ENCODE measurements at regions of chr10 and their contacts with region 1.

Region 1: GRCh38 chr10:103712570-103713498 is 142.5 kb downstream of the SH3PXD2A start:
- DNase-seq: peak; percentile 79 to 88
- H3K4me3 ChIP-seq: no peak overlapping the region
- H3K4me3 Mint-ChIP-seq: no peak overlapping the region
- H3K27ac Mint-ChIP-seq: no peak overlapping the region
- H3K4me1 ChIP-seq: peaks cover 21% of the 10 kb centered on the region
- H3K4me1 Mint-ChIP-seq: peaks cover 22% of the 10 kb centered on the region
- H3K27me3 ChIP-seq: no peaks in the 10 kb centered on the region
- H3K27me3 Mint-ChIP-seq: no peaks in the 10 kb centered on the region
- CTCF ChIP-seq: peak; percentile 82 to 93

Region 2: GRCh38 chr10:103451831-103452505 is 260.9 kb before region 1 on chr10 and contains the start of gene CALHM2:
- CTCF ChIA-PET with region 1: no interaction called
- POLR2A ChIA-PET with region 1: no interaction called
- intact Hi-C with region 1: no loop called
- DNase-seq: peak; percentile 56 to 58
- H3K4me3 ChIP-seq: peak within 1 kb of the TSS; percentile 30
- H3K4me3 Mint-ChIP-seq: peak within 1 kb of the TSS; percentile 70
- H3K27ac Mint-ChIP-seq: no peak within 1 kb of the TSS
- H3K4me1 ChIP-seq: peaks cover 5% of the 10 kb centered on the region; the same call in 1 of the 2 replicates
- H3K4me1 Mint-ChIP-seq: no peaks in the 10 kb centered on the region
- H3K27me3 ChIP-seq: no peaks in the 10 kb centered on the region
- H3K27me3 Mint-ChIP-seq: no peaks in the 10 kb centered on the region
- CTCF ChIP-seq: no peak
- total RNA-seq, gene CALHM2: 0.52 and 0.58 TPM in 2 replicates

Region 3: GRCh38 chr10:103733045-103733419 is 20.2 kb after region 1 on chr10:
- CTCF ChIA-PET with region 1: interaction called, 3 read pairs
- POLR2A ChIA-PET with region 1: no interaction called
- intact Hi-C with region 1: loop called (anchors 2 kb)
- DNase-seq: no peak
- H3K4me3 ChIP-seq: no peak overlapping the region
- H3K4me3 Mint-ChIP-seq: no peak overlapping the region
- H3K27ac Mint-ChIP-seq: no peak overlapping the region
- H3K4me1 ChIP-seq: peaks cover 9% of the 10 kb centered on the region
- H3K4me1 Mint-ChIP-seq: peaks cover 7% of the 10 kb centered on the region
- H3K27me3 ChIP-seq: no peaks in the 10 kb centered on the region
- H3K27me3 Mint-ChIP-seq: no peaks in the 10 kb centered on the region
- CTCF ChIP-seq: no peak

Region 4: GRCh38 chr10:103793920-103794883 is 81.4 kb after region 1 on chr10:
- CTCF ChIA-PET with region 1: interaction called, 5 read pairs
- POLR2A ChIA-PET with region 1: interaction called, 3 read pairs
- intact Hi-C with region 1: loop called (anchors 2 kb)
- DNase-seq: peak; percentile 94 to 97
- H3K4me3 ChIP-seq: 0 out of 2 replicates have a peak overlapping the region, but pooled peaks have one; percentile 1
- H3K4me3 Mint-ChIP-seq: peak overlapping the region; percentile 62
- H3K27ac Mint-ChIP-seq: peak overlapping the region; percentile 90
- H3K4me1 ChIP-seq: peaks cover 49% of the 10 kb centered on the region
- H3K4me1 Mint-ChIP-seq: peaks cover 31% of the 10 kb centered on the region
- H3K27me3 ChIP-seq: no peaks in the 10 kb centered on the region
- H3K27me3 Mint-ChIP-seq: no peaks in the 10 kb centered on the region
- CTCF ChIP-seq: no peak

Region 5: DNA sequence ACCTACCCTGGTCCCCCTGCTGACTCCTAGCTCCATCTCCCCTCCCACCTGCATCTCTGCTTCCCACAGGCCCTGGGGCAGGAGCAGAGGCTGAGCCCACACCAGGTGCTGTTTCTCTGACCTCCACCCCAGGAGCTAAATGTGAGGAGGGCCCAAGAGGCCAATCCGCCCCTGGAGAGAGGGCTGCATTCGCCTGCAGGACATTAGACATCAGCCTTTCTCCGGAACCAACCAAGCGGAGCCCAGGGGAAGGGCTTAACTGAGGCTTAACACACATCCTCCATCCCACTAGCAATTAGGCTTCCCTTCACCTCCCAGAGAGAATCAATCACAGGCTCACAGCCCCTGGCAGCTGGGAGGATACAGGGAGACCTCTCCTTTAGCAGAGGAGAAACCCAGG is 92.0 kb after region 1 on chr10:
- CTCF ChIA-PET with region 1: no interaction called
- POLR2A ChIA-PET with region 1: no interaction called
- intact Hi-C with region 1: no loop called
- DNase-seq: no peak
- H3K4me3 ChIP-seq: no peak overlapping the region
- H3K4me3 Mint-ChIP-seq: no peak overlapping the region
- H3K27ac Mint-ChIP-seq: no peak overlapping the region
- H3K4me1 ChIP-seq: peaks cover 65% of the 10 kb centered on the region
- H3K4me1 Mint-ChIP-seq: peaks cover 46% of the 10 kb centered on the region
- H3K27me3 ChIP-seq: no peaks in the 10 kb centered on the region
- H3K27me3 Mint-ChIP-seq: no peaks in the 10 kb centered on the region
- CTCF ChIP-seq: no peak

Region 6: DNA sequence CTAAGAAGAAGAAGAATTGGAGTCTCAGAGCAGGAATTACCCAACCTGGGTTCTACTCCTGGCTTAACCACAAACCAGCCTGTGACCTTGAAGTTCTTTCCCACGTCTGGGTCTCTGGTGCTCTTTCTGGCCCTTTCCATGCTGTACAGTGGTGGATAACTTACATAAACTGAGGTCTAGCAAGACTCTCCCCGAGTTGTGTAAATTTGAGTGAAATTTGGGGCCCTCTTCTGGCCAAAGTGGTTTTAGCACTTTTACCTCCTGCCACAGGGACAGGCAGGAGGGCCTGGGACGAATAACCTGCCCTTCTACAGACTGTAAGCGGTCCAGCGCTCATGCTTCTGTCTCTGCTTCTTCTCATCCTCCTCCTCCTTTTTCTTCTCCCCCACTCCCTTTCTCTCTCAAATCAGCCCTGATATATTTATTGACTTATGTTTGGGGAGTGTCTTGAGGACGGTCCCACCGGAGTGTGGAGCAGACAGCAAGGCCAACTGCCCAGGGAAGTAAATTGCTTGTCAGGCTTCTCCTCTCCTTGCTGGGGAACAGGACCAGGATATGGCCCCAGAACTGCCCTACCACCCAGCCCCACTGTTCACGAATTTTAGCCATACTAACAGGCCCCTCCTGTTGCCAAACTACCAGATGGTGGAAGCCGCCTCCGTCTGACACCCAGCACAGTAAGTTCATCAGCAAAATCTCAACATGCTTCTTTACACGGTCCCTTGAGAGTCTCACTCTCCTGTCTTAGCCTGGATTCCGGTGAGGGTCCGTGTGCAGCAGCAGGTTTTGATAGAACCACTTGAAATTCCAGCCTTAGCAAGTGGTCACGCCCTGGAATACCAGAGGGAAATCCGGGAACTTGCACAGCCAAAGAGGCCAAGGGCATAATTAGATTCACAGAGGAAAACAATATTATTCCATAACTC is 146.6 kb after region 1 on chr10:
- CTCF ChIA-PET with region 1: interaction called, 13 read pairs
- POLR2A ChIA-PET with region 1: no interaction called
- intact Hi-C with region 1: loop called (anchors 1 kb)
- DNase-seq: peak; percentile 62 to 79
- H3K4me3 ChIP-seq: no peak overlapping the region
- H3K4me3 Mint-ChIP-seq: no peak overlapping the region
- H3K27ac Mint-ChIP-seq: no peak overlapping the region
- H3K4me1 ChIP-seq: peaks cover 6% of the 10 kb centered on the region
- H3K4me1 Mint-ChIP-seq: peaks cover 2% of the 10 kb centered on the region
- H3K27me3 ChIP-seq: no peaks in the 10 kb centered on the region
- H3K27me3 Mint-ChIP-seq: no peaks in the 10 kb centered on the region
- CTCF ChIP-seq: peak; percentile 71 to 82

Measured in Caco-2 (cell line).